ENCODE measurements at regions of chr4 and their contacts with region 1.

Region 1: DNA sequence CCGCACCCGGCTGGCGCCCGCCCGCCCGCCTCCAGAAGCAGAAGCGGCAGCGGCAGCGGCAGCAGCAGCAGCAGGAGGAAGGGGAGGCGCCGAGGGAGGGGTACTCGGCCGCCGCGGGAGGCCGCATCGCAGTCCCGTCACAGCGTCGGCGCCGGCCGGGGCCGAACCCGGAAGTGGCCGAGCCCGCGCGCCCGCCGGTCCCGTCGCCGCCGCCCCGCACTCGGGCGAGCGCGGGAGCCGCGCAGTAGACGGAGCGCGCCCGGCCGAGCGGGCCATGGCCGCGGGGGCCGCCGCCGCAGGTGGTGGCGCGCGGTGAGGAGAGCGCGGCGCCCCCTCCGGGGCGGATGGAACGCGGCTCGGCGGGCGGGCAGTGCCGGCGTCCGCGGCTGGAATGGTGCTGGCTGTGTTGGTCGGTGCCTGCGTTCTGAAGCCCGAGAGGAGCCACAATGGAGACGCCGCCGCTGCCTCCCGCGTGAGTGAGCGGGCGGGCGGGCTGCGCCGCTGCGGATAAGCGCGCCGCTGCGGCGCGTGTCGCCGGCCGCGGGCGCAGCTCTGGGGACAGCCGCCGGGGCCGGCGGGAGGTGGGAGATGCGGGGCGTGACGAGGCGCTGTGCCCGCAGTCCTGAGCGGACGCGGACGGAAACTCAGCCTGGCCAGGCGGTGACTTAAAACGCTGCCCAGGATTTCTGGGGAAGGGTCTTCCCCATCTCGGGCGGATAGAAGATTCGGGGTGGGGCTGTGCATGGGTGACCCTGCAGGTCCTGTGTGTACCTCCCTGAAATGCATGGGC is at the start of gene KLHL2:
- DNase-seq: peak; percentile 74 to 83
- H3K4me3 ChIP-seq: peak within 1 kb of the TSS; percentile 85
- H3K4me3 Mint-ChIP-seq: peak within 1 kb of the TSS; percentile 74
- H3K27ac Mint-ChIP-seq: peak within 1 kb of the TSS; percentile 49
- H3K4me1 ChIP-seq: peaks cover 25% of the 10 kb centered on the region
- H3K4me1 Mint-ChIP-seq: peaks cover 27% of the 10 kb centered on the region
- H3K27me3 ChIP-seq: no peaks in the 10 kb centered on the region
- H3K27me3 Mint-ChIP-seq: no peaks in the 10 kb centered on the region
- CTCF ChIP-seq: no peak
- total RNA-seq, gene KLHL2: 14.5 and 15.9 TPM in 2 replicates

Region 2: GRCh38 chr4:164959896-164960295 is 247.7 kb before region 1 on chr4:
- CTCF ChIA-PET with region 1: no interaction called
- POLR2A ChIA-PET with region 1: no interaction called
- intact Hi-C with region 1: no loop called
- DNase-seq: no peak
- H3K4me3 ChIP-seq: no peak overlapping the region
- H3K4me3 Mint-ChIP-seq: no peak overlapping the region
- H3K27ac Mint-ChIP-seq: no peak overlapping the region
- H3K4me1 ChIP-seq: peaks cover 7% of the 10 kb centered on the region
- H3K4me1 Mint-ChIP-seq: peaks cover 13% of the 10 kb centered on the region
- H3K27me3 ChIP-seq: no peaks in the 10 kb centered on the region
- H3K27me3 Mint-ChIP-seq: no peaks in the 10 kb centered on the region
- CTCF ChIP-seq: no peak

Region 3: DNA sequence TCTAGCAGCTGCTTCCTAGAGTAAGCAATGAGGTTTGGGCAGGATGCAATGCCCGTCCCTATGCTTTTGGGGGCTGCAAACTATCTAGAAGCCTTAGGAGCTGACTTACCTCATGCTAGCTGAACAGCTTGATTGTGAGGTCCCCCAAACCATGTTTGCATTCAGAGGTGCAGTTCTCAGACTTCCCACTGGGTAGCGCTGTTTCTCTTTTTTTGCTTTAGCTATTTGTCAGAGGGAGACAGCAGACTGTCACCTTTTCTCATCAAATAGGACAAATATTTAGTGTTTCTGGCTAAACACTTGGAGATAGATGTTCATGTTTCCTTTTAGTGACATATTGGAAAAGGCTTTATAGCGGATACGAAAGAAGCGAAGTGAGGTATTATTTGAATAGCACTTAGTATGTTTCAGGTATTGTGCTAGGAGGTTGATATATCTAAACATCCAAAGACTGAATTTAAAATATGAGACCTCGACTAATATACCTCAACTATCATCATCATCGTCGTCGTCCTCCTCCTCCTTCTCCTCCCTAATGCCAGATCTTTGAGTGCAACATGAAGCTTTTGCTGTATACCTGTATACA is 76.3 kb before region 1 on chr4:
- CTCF ChIA-PET with region 1: interaction called, 5 read pairs
- POLR2A ChIA-PET with region 1: no interaction called
- intact Hi-C with region 1: loop called (anchors 1 kb)
- DNase-seq: peak; percentile 64 to 80
- H3K4me3 ChIP-seq: no peak overlapping the region
- H3K4me3 Mint-ChIP-seq: no peak overlapping the region
- H3K27ac Mint-ChIP-seq: no peak overlapping the region
- H3K4me1 ChIP-seq: no peaks in the 10 kb centered on the region
- H3K4me1 Mint-ChIP-seq: peaks cover 14% of the 10 kb centered on the region
- H3K27me3 ChIP-seq: no peaks in the 10 kb centered on the region
- H3K27me3 Mint-ChIP-seq: peaks cover 14% of the 10 kb centered on the region
- CTCF ChIP-seq: peak; percentile 73 to 82

Measured in Caco-2 (cell line).